Endothelial cell of umbilical vein (primary cell): ENCODE measurements at regions of chr11 and their contacts with region 1.

Region 1: DNA sequence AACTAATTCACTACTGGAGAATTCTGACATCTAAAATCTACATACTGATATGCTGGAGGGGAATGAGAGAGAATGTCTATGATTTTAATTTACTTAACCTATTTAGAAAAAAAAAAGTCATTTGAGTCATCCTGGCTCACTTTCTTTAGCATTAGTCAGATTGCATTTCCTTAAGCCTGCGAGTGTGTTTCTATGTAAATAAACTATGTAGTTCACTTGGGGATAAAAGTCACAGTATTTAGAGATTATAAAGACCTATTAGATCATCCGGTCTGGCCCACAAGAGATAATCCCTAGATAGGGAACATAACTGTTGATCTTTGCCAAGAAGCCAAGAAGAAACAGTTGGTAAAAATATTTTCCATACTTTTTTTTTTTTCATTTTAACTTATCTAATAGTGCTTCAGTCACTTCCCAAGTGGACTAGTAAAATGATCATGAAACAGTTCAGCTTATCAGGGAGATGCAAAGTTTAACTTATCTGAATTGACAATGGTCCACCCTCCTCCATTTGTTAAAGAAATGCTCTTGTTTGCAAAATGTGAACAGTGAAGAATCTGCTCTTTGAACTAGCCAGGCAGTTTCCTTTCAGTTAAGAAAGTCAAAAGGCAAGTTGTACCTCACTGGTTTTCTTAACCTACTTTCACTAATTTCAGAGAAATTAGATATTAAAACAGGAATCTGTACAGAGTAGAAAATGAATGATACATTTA is 21.2 kb upstream of the BLID start:
- DNase-seq: peak; percentile 88
- H3K4me3 ChIP-seq: peak overlapping the region in 1 of 3 experiments; percentile 8
- H3K27ac ChIP-seq: peak overlapping the region; percentile 79
- H3K4me1 ChIP-seq: peaks cover 65% of the 10 kb centered on the region
- H3K27me3 ChIP-seq: no peaks in the 10 kb centered on the region
- CTCF ChIP-seq: no peak
- POLR2A ChIP-seq: peak; percentile 30

Region 2: GRCh38 chr11:121249039-121249663 is 888.1 kb before region 1 on chr11:
- CTCF ChIA-PET with region 1: no interaction called
- POLR2A ChIA-PET with region 1: no interaction called
- dilution Hi-C with region 1: no loop called
- intact Hi-C with region 1: no loop called
- DNase-seq: peak; percentile 54
- H3K4me3 ChIP-seq: no peak overlapping the region
- H3K27ac ChIP-seq: no peak overlapping the region
- H3K4me1 ChIP-seq: no peaks in the 10 kb centered on the region
- H3K27me3 ChIP-seq: peaks cover 0 to 2% of the 10 kb centered on the region in 2 experiments
- CTCF ChIP-seq: peak; percentile 45 to 58
- POLR2A ChIP-seq: no peak

Region 3: DNA sequence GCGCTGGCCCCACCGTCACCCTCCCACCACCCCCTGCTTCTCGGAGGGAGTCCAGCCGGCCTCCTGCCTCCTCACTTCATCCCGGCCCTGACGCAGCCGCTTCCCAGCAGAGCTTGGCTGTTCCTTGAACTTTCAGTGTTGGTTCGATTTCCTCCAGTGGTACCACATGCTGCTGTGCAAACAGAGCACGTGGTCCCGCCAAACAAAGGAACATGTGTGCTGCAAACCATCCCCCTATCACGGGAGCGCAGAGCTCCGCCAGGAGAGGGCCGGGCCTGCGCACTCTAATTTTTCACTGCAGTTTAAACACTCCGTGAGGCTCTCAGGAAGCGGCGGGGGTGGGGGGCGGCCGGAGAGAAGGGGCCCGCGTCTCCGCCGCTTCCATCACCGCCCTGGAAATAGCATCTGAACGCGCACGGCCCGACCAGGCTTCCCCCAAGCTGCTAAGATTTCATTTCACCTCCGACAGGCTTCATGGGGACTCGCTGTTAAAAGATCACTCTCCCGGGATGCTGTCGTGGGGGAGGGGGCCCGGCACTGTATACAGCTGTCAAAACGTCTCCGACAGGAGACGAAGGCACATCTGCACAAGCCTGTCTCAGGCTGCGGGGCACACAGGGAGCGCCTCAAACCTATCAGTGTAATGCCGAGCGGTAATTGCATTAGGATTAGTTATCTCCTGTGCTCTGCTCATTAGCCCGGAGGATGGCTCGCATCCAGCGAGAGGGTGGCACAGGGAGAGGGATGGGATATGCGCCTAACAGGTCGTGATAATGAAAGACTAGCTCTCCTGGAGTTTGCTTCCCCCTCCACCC is 414.6 kb before region 1 on chr11:
- CTCF ChIA-PET with region 1: no interaction called
- POLR2A ChIA-PET with region 1: no interaction called
- dilution Hi-C with region 1: no loop called
- intact Hi-C with region 1: loop called (anchors 5 kb)
- DNase-seq: peak; percentile 94
- H3K4me3 ChIP-seq: peak overlapping the region; percentile 21 to 59 (median 31)
- H3K27ac ChIP-seq: peak overlapping the region; percentile 59
- H3K4me1 ChIP-seq: peaks cover 25% of the 10 kb centered on the region
- H3K27me3 ChIP-seq: peaks cover 3 to 5% of the 10 kb centered on the region in 2 experiments
- CTCF ChIP-seq: no peak
- POLR2A ChIP-seq: no peak

Region 4: GRCh38 chr11:121767433-121767832 is 369.8 kb before region 1 on chr11:
- CTCF ChIA-PET with region 1: no interaction called
- POLR2A ChIA-PET with region 1: no interaction called
- dilution Hi-C with region 1: no loop called
- intact Hi-C with region 1: no loop called
- DNase-seq: no peak
- H3K4me3 ChIP-seq: no peak overlapping the region
- H3K27ac ChIP-seq: no peak overlapping the region
- H3K4me1 ChIP-seq: no peaks in the 10 kb centered on the region
- H3K27me3 ChIP-seq: peaks cover 0 to 2% of the 10 kb centered on the region in 2 experiments
- CTCF ChIP-seq: no peak
- POLR2A ChIP-seq: no peak

Region 5: GRCh38 chr11:122045181-122045586 is 92.1 kb before region 1 on chr11:
- CTCF ChIA-PET with region 1: no interaction called
- POLR2A ChIA-PET with region 1: no interaction called
- dilution Hi-C with region 1: no loop called
- intact Hi-C with region 1: loop called (anchors 1 kb)
- DNase-seq: peak; percentile 92
- H3K4me3 ChIP-seq: no peak overlapping the region
- H3K27ac ChIP-seq: peak overlapping the region; percentile 82
- H3K4me1 ChIP-seq: peaks cover 32% of the 10 kb centered on the region
- H3K27me3 ChIP-seq: no peaks in the 10 kb centered on the region
- CTCF ChIP-seq: no peak
- POLR2A ChIP-seq: no peak

Region 6: DNA sequence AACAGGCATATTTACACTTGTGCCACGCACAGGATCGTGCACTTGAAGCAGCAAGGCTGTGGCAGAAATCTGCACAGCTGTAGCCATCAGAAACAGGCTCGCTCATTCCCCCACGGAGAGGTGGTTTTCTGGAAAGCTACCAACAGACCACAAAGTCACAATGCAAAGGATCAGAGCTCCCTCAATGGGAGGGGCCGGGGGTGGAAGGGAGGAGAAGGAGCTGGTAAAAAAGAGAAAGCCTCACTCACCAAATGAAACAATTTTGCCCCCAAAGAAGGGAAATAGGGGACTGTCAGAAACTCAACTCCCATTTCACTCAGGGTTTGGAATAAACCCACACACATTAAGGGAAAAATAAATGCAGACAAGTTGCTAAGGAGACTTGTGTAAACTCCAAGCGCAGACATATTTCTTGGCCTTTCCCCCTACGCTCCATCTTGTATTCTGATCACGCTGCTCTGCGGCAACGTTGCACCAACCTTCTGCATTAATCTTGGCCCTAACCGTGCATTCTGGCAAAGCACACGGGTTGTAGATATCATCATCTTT is 22.0 kb after region 1 on chr11:
- CTCF ChIA-PET with region 1: interaction called, 7 read pairs
- POLR2A ChIA-PET with region 1: no interaction called
- dilution Hi-C with region 1: no loop called
- intact Hi-C with region 1: loop called (anchors 1 kb)
- DNase-seq: peak; percentile 29
- H3K4me3 ChIP-seq: no peak overlapping the region
- H3K27ac ChIP-seq: peak overlapping the region; percentile 82
- H3K4me1 ChIP-seq: peaks cover 68% of the 10 kb centered on the region
- H3K27me3 ChIP-seq: no peaks in the 10 kb centered on the region
- CTCF ChIP-seq: no peak
- POLR2A ChIP-seq: no peak

Region 7: GRCh38 chr11:122179961-122180834 is 43.0 kb after region 1 on chr11:
- CTCF ChIA-PET with region 1: interaction called, 3 read pairs
- POLR2A ChIA-PET with region 1: no interaction called
- dilution Hi-C with region 1: no loop called
- intact Hi-C with region 1: loop called (anchors 2 kb)
- DNase-seq: peak; percentile 87
- H3K4me3 ChIP-seq: peak overlapping the region; percentile 29 to 100 (median 99)
- H3K27ac ChIP-seq: peak overlapping the region; percentile 86
- H3K4me1 ChIP-seq: peaks cover 66% of the 10 kb centered on the region
- H3K27me3 ChIP-seq: no peaks in the 10 kb centered on the region
- CTCF ChIP-seq: no peak
- POLR2A ChIP-seq: peak; percentile 84

Region 8: DNA sequence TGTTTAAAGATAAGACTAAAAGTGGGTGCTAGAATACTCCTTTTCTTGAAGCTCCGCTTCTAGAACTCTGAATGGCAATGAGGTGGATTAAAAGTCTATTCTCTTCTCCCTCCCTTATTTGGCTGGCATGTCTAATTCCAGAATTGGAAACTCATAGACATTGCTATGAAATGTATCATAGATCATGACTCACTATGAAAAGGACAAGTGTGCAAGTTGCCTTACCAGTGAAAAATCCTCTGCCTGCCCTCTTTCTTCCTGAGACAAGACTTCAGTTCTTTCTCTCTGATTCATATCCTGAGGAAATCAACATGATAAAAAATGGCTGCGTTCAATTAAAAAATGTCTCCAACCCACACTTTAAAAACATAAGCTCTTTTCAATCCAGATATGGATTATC is 52.0 kb after region 1 on chr11:
- CTCF ChIA-PET with region 1: interaction called, 4 read pairs
- POLR2A ChIA-PET with region 1: no interaction called
- dilution Hi-C with region 1: no loop called
- intact Hi-C with region 1: loop called (anchors 1 kb)
- DNase-seq: peak; percentile 94
- H3K4me3 ChIP-seq: peak overlapping the region in 1 of 3 experiments; percentile 7
- H3K27ac ChIP-seq: peak overlapping the region; percentile 85
- H3K4me1 ChIP-seq: peaks cover 58% of the 10 kb centered on the region
- H3K27me3 ChIP-seq: no peaks in the 10 kb centered on the region
- CTCF ChIP-seq: no peak
- POLR2A ChIP-seq: peak; percentile 57

Region 9: GRCh38 chr11:122197055-122197987 is 60.1 kb after region 1 on chr11:
- CTCF ChIA-PET with region 1: interaction called, 21 read pairs
- POLR2A ChIA-PET with region 1: no interaction called
- dilution Hi-C with region 1: no loop called
- intact Hi-C with region 1: loop called (anchors 1 kb)
- DNase-seq: peak; percentile 96
- H3K4me3 ChIP-seq: peak overlapping the region in 1 of 3 experiments; percentile 26
- H3K27ac ChIP-seq: peak overlapping the region; percentile 95
- H3K4me1 ChIP-seq: peaks cover 69% of the 10 kb centered on the region
- H3K27me3 ChIP-seq: no peaks in the 10 kb centered on the region
- CTCF ChIP-seq: no peak
- POLR2A ChIP-seq: peak; percentile 82

Region 10: DNA sequence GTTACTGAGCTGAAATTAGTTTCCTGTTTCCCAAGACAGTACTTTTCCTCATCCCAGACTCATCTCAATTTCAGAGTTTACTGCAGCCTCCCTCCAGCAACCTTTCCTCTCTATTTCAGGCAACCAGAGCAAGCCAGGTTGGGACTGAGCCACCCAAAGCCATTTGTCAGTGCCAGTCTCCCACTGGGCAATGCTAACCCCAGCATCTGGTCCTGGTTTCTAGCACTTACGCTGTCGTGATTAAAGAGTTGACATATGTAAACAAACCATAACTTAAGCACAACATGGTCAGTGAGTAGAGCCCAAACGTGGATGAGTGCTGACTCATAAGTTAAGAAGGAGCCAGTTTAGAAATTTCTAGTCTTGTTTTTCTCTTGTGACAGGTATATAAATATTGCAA is 98.4 kb after region 1 on chr11:
- CTCF ChIA-PET with region 1: no interaction called
- POLR2A ChIA-PET with region 1: no interaction called
- dilution Hi-C with region 1: no loop called
- intact Hi-C with region 1: no loop called
- DNase-seq: no peak
- H3K4me3 ChIP-seq: no peak overlapping the region
- H3K27ac ChIP-seq: no peak overlapping the region
- H3K4me1 ChIP-seq: peaks cover 3% of the 10 kb centered on the region
- H3K27me3 ChIP-seq: no peaks in the 10 kb centered on the region
- CTCF ChIP-seq: no peak
- POLR2A ChIP-seq: no peak

Region 11: DNA sequence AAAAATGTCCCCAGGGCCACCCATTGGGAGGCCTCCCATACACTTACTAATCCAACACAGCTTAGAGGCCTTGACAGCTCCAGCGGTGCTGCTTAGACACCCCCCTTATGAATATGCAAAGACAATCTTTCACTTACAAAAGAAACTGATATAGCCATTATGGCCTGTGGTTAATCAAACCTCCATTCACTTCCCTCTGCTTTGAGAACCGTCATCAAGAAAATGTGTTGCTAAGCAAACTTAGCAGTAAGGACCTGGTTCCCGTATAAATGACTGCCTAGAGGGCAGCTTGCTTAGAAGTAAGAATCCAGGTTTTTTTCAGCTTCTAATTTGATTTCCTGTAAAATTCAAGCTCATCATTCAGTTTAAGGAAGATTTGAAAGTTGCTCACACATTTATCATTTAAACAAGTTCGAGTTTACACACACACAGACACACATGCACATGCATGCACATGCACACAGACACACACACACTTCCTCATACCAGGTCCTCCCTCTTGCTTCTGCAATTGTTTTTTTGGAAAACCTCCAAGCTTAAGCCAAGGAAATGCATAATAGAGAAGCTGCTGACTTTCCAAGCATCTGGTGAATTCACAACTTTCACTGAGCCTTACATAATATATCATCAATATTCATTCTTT is 116.5 kb after region 1 on chr11:
- CTCF ChIA-PET with region 1: no interaction called
- POLR2A ChIA-PET with region 1: no interaction called
- dilution Hi-C with region 1: no loop called
- intact Hi-C with region 1: no loop called
- DNase-seq: no peak
- H3K4me3 ChIP-seq: no peak overlapping the region
- H3K27ac ChIP-seq: no peak overlapping the region
- H3K4me1 ChIP-seq: no peaks in the 10 kb centered on the region
- H3K27me3 ChIP-seq: no peaks in the 10 kb centered on the region
- CTCF ChIP-seq: no peak
- POLR2A ChIP-seq: no peak